H1 (cell line): ENCODE measurements at regions of chr3 and their contacts with region 1.

Region 1: GRCh38 chr3:48446425-48447193 is at the start of gene ATRIP:
- DNase-seq: peak in 1 of 2 experiments; percentile 95
- H3K4me3 ChIP-seq: peak within 1 kb of the TSS; percentile 80 to 98 (median 96)
- H3K27ac ChIP-seq: peak within 1 kb of the TSS; percentile 66
- H3K4me1 ChIP-seq: peaks cover 3 to 15% (median 6%) of the 10 kb centered on the region in 4 experiments; a peak in 5 of 7 replicates
- H3K27me3 ChIP-seq: no peaks in the 10 kb centered on the region
- CTCF ChIP-seq: no peak
- EP300 ChIP-seq: peak in 1 of 2 experiments; percentile 35; a peak in 1 of 3 replicates
- POLR2A ChIP-seq: peak; percentile 81 to 97
- RAD21 ChIP-seq: no peak
- total RNA-seq, gene ATRIP: 16.7 and 20.2 TPM in 2 replicates

Region 2: GRCh38 chr3:48459773-48460516 is 13.3 kb after region 1 on chr3:
- CTCF ChIA-PET with region 1: interaction called, 6 read pairs
- POLR2A ChIA-PET with region 1: interaction called, 37 read pairs
- DNase-seq: no peak
- H3K4me3 ChIP-seq: no peak overlapping the region
- H3K27ac ChIP-seq: no peak overlapping the region
- H3K4me1 ChIP-seq: peaks cover 0 to 3% (median 0%) of the 10 kb centered on the region in 4 experiments; a peak in 1 of 7 replicates
- H3K27me3 ChIP-seq: no peaks in the 10 kb centered on the region
- CTCF ChIP-seq: no peak
- EP300 ChIP-seq: no peak
- POLR2A ChIP-seq: no peak
- RAD21 ChIP-seq: no peak

Region 3: DNA sequence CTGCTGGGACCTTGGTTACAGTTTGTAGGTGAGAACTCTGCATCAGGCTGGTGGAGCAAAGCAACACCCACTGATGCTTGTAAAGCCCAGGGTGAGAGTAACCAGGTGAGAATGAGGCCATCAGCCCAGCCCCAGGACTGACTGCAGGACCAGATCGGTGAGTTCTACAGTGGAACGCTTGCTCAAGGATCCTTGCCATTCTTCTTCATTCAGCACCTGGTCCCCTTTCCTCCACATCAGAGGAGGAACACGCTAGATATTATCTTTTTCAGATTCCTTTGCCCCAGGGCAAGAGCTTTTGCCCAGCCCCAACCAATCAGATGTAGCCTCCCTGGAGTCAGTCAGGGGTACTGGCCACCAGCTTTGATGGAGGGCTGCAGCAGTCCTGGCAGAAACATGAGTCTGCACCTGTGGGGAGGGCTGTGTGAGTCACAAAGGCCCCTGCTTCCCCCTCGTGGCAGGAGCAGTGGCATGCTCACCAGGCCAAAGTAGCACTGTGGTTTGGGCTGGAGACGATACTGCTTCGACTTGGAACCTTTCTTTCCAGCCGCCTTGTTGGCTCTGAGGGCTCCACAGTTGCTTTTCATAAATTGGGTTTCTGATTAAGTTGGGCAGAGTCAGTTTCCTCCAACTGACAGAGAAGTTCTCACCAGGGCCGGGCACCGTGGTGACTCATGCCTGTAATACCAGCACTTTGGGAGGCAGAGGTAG is 60.9 kb after region 1 on chr3:
- CTCF ChIA-PET with region 1: interaction called, 5 read pairs
- POLR2A ChIA-PET with region 1: interaction called, 10 read pairs
- DNase-seq: peak; percentile 75 to 80
- H3K4me3 ChIP-seq: no peak overlapping the region
- H3K27ac ChIP-seq: 0 out of 2 replicates have a peak overlapping the region, but pooled peaks have one; percentile 2
- H3K4me1 ChIP-seq: peaks cover 4 to 14% (median 12%) of the 10 kb centered on the region in 4 experiments
- H3K27me3 ChIP-seq: peaks cover 0 to 3% (median 0%) of the 10 kb centered on the region in 4 experiments; a peak in 2 of 7 replicates
- CTCF ChIP-seq: peak in 2 of 3 experiments; percentile 90 to 95; a peak in 3 of 4 replicates
- EP300 ChIP-seq: no peak; a peak in 1 of 3 replicates
- POLR2A ChIP-seq: no peak
- RAD21 ChIP-seq: peak; percentile 93 to 95

Region 4: GRCh38 chr3:48708481-48708889 is 261.9 kb after region 1 on chr3:
- CTCF ChIA-PET with region 1: no interaction called
- POLR2A ChIA-PET with region 1: no interaction called
- DNase-seq: no peak
- H3K4me3 ChIP-seq: no peak overlapping the region
- H3K27ac ChIP-seq: no peak overlapping the region; the same call in 1 of the 2 replicates
- H3K4me1 ChIP-seq: peaks cover 0 to 3% (median 3%) of the 10 kb centered on the region in 4 experiments; a peak in 2 of 7 replicates
- H3K27me3 ChIP-seq: no peaks in the 10 kb centered on the region
- CTCF ChIP-seq: no peak
- EP300 ChIP-seq: no peak
- POLR2A ChIP-seq: no peak
- RAD21 ChIP-seq: no peak